ENCODE measurements at regions of chr17 and their contacts with region 1.

Region 1: DNA sequence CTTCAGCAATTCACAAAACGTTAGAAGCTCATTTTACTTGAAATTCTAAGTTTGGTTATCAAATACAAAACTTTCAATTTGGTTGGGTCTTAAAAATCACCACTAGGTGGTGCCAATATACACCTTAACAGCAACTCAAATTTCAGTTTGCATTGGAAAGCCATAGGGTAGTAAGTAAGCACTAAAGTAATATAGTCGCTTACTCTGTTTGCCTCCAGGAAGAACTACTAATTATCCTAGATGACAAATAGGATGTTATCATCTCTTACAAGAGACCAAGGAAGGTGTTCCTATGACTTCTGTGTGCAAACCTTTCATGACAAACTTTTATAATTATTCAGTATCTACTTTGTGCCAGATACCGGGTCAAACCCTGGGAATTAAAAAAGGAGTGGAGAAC is 93.3 kb downstream of the MYO1D start:
- DNase-seq: no peak
- H3K4me3 ChIP-seq: no peak overlapping the region
- H3K27ac ChIP-seq: no peak overlapping the region
- H3K4me1 ChIP-seq: no peaks in the 10 kb centered on the region
- H3K27me3 ChIP-seq: no peaks in the 10 kb centered on the region
- CTCF ChIP-seq: peak; percentile 55 to 93 (median 68)
- POLR2A ChIP-seq: no peak

Region 2: GRCh38 chr17:32877164-32877764 is 93.7 kb after region 1 on chr17:
- intact Hi-C with region 1: loop called (anchors 2 kb)
- DNase-seq: peak; percentile 93 to 94
- H3K4me3 ChIP-seq: peak overlapping the region in 1 of 3 donors; percentile 85
- H3K27ac ChIP-seq: peak overlapping the region; percentile 95 to 99 (median 97)
- H3K4me1 ChIP-seq: peaks cover 4 to 26% of the 10 kb centered on the region in 2 donors
- H3K27me3 ChIP-seq: no peaks in the 10 kb centered on the region
- CTCF ChIP-seq: peak; percentile 71 to 100 (median 88)
- POLR2A ChIP-seq: no peak

Region 3: DNA sequence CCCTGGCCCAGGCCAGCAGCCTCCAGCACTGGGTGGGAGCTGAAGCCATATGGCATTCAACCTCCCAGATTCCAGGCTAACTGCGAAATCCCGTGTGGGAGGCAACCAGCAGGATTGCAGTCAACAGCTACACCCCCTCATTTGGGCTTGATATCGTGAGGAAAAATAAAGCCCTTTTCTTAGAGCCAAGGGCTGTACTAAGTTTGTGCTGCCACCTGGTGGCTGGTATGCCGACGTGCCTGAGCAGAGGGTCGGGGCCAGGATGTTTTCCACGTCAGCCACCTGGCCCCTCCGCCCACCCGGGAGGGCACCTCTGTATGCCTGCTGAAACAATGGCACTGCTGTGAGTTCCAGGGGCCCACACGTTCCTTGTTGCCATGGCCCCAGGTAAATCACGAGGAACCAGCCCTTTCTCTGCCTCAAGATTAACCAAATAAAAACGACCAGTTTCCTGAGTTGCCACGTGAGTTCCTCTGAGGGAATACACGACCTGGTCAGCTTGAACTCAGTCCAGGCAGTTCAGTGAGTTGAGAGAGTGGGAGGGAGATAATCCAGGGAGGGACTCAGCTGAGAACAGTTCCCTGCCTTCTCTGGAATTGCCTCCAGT is 153.4 kb after region 1 on chr17:
- intact Hi-C with region 1: loop called (anchors 5 kb)
- DNase-seq: peak; percentile 87 to 88
- H3K4me3 ChIP-seq: no peak overlapping the region
- H3K27ac ChIP-seq: peak overlapping the region; percentile 55 to 81 (median 73)
- H3K4me1 ChIP-seq: peaks cover 6 to 13% of the 10 kb centered on the region in 2 donors
- H3K27me3 ChIP-seq: no peaks in the 10 kb centered on the region
- CTCF ChIP-seq: peak; percentile 88 to 99 (median 92)
- POLR2A ChIP-seq: peak; percentile 25 to 37

Region 4: GRCh38 chr17:32997753-32998632 is 214.4 kb after region 1 on chr17:
- intact Hi-C with region 1: loop called (anchors 5 kb)
- DNase-seq: peak; percentile 81 to 87
- H3K4me3 ChIP-seq: no peak overlapping the region
- H3K27ac ChIP-seq: no peak overlapping the region
- H3K4me1 ChIP-seq: peaks cover 0 to 7% of the 10 kb centered on the region in 2 donors
- H3K27me3 ChIP-seq: no peaks in the 10 kb centered on the region
- CTCF ChIP-seq: peak; percentile 67 to 94 (median 79)
- POLR2A ChIP-seq: no peak

Measured in thyroid gland (tissue), 4 donors.